Caco-2 (cell line): ENCODE measurements at regions of chrX and their contacts with region 1.

Region 1: GRCh38 chrX:69503782-69504625 is at the start of gene NALF2:
- DNase-seq: peak; percentile 80 to 81
- H3K4me3 ChIP-seq: peak within 1 kb of the TSS; percentile 63
- H3K4me3 Mint-ChIP-seq: peak within 1 kb of the TSS; percentile 77
- H3K27ac Mint-ChIP-seq: no peak within 1 kb of the TSS
- H3K4me1 ChIP-seq: no peaks in the 10 kb centered on the region
- H3K4me1 Mint-ChIP-seq: no peaks in the 10 kb centered on the region
- H3K27me3 ChIP-seq: no peaks in the 10 kb centered on the region
- H3K27me3 Mint-ChIP-seq: peaks cover 2% of the 10 kb centered on the region
- CTCF ChIP-seq: peak in 1 of 2 experiments; percentile 34
- total RNA-seq, gene NALF2: 3.0 and 3.1 TPM in 2 replicates

Region 2: GRCh38 chrX:69489625-69490024 is 14.4 kb before region 1 on chrX:
- CTCF ChIA-PET with region 1: no interaction called
- POLR2A ChIA-PET with region 1: no interaction called
- intact Hi-C with region 1: no loop called
- DNase-seq: no peak
- H3K4me3 ChIP-seq: no peak overlapping the region
- H3K4me3 Mint-ChIP-seq: no peak overlapping the region
- H3K27ac Mint-ChIP-seq: no peak overlapping the region
- H3K4me1 ChIP-seq: no peaks in the 10 kb centered on the region
- H3K4me1 Mint-ChIP-seq: no peaks in the 10 kb centered on the region
- H3K27me3 ChIP-seq: no peaks in the 10 kb centered on the region; the same call in 1 of the 2 replicates
- H3K27me3 Mint-ChIP-seq: peaks cover 7% of the 10 kb centered on the region
- CTCF ChIP-seq: no peak

Region 3: DNA sequence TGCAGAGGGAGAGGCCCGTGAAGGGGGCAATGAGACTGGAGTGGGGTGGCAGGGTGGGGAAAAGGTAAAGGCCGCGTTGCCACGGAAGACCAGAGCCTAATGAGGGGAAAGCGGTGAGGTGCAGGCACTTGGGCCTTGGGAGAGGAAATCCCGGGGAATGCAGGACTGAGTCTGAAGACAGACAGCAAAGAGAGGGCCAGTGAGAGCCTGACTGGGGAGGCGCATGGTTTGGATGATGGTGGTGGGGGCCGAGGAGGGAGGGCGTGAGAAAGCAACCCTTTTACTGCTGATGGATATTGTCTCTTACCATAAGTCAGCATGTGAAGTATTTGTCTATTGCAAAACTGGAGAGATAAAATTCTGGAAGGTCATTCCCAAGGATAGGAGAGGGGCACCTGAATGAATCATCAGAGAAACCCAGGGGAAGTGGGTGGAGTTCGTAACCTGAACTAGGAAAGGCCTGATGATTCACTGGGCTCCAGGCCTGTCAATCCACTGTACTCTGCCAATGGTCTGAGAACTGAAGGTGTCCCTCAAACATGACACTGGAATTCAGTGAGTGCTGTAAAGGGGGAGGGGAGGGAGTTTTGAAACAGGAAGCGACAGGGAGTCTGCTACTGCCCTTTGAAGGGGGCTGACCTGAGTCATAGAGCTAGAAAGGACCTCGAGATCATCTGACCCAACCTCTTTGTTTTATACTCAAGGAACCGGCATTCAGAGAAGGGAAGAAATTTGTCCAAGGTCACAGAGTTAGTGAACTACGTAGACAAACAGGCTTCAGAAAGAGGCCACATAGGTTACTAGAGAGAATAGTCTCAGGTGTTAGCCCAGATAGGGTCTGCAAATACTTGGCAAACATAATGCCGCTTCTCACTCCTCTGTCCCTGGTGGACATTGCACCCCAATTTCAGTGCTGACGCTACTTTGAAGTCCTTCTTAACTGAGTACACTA is 52.3 kb after region 1 on chrX:
- CTCF ChIA-PET with region 1: no interaction called
- POLR2A ChIA-PET with region 1: no interaction called
- intact Hi-C with region 1: loop called (anchors 1 kb)
- DNase-seq: peak; percentile 84 to 92
- H3K4me3 ChIP-seq: no peak overlapping the region
- H3K4me3 Mint-ChIP-seq: peak overlapping the region; percentile 54
- H3K27ac Mint-ChIP-seq: peak overlapping the region; percentile 89
- H3K4me1 ChIP-seq: peaks cover 19% of the 10 kb centered on the region
- H3K4me1 Mint-ChIP-seq: no peaks in the 10 kb centered on the region
- H3K27me3 ChIP-seq: no peaks in the 10 kb centered on the region
- H3K27me3 Mint-ChIP-seq: no peaks in the 10 kb centered on the region
- CTCF ChIP-seq: no peak